B cell (primary cell): ENCODE measurements at regions of chr1 and their contacts with region 1.

Region 1: DNA sequence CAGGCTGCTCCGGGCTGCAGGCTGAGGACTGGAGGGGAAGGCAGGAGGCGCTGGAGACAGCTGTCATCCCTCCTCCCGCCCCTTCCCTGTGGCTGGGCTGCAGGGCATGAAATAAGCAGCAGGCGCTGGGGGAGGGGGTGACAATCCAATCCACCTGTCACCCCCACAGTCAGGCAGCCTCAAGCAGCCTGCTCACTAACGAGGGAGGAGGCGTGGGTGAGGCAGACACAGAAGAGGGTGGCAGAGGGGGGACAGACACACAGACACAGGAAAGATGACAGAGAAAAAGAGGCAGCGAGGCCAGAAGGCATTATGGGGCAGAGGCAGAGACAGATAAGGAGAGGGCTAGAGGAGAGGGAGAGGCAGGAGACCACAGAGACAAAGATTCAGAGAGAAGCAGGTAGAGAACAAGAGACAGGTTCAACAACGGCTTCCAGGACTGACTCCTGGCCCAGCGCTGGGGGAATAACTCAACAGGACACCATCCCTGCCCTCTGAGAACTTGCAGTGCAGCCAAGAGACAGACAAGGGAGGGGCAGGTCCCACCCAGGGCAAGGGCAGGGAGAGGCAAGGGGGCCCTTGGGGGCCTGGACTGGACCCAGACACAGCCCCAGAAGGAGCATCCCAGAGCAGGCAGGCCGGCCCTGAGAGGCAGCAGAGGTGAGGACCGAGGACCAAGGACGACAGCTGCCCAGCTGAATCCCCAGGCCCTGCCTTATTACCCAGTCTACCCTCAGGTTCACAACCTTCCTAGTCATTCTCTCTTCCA is 11.2 kb downstream of the MEF2D start:
- DNase-seq: peak; percentile 49
- ATAC-seq: no peak
- H3K4me3 ChIP-seq: peak overlapping the region in 2 of 5 experiments; percentile 7 to 30
- H3K4me3 Mint-ChIP-seq: peak overlapping the region; percentile 90
- H3K27ac ChIP-seq: peak overlapping the region; percentile 72 to 94
- H3K27ac Mint-ChIP-seq: peak overlapping the region; percentile 96
- H3K4me1 ChIP-seq: peaks cover 83 to 93% of the 10 kb centered on the region in 2 donors
- H3K4me1 Mint-ChIP-seq: peaks cover 91% of the 10 kb centered on the region
- H3K27me3 ChIP-seq: no peaks in the 10 kb centered on the region
- H3K27me3 Mint-ChIP-seq: no peaks in the 10 kb centered on the region
- CTCF ChIP-seq: no peak

Region 2: GRCh38 chr1:155145491-155145890 is 1343.9 kb before region 1 on chr1:
- CTCF ChIA-PET with region 1: no interaction called
- POLR2A ChIA-PET with region 1: interaction called, 10 read pairs
- intact Hi-C with region 1: no loop called
- DNase-seq: no peak
- ATAC-seq: no peak
- H3K4me3 ChIP-seq: no peak overlapping the region
- H3K4me3 Mint-ChIP-seq: no peak overlapping the region
- H3K27ac ChIP-seq: no peak overlapping the region
- H3K27ac Mint-ChIP-seq: no peak overlapping the region
- H3K4me1 ChIP-seq: peaks cover 13 to 17% of the 10 kb centered on the region in 2 donors
- H3K4me1 Mint-ChIP-seq: peaks cover 20% of the 10 kb centered on the region
- H3K27me3 ChIP-seq: no peaks in the 10 kb centered on the region
- H3K27me3 Mint-ChIP-seq: no peaks in the 10 kb centered on the region
- CTCF ChIP-seq: no peak

Region 3: DNA sequence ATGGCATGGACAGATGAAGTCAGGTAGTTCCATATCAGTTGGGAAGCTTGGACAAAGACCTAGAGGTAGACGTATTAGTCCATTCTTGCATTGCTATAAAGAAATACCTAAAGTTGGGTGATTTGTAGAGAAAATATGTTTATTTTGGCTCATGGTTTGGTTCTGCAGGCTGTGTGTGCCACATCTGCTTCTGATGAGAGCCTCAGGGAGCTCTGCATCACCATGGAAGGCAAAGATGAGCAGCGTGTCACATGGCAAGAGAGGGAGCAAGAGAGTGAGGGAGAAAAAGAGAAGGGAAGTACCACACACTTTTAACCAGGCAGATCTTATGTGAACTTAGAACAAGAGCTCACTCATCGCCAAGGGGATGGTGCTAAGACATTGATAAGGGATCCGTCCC is 142.0 kb before region 1 on chr1:
- CTCF ChIA-PET with region 1: no interaction called
- POLR2A ChIA-PET with region 1: interaction called, 10 read pairs
- intact Hi-C with region 1: no loop called
- DNase-seq: no peak
- ATAC-seq: no peak
- H3K4me3 ChIP-seq: no peak overlapping the region
- H3K4me3 Mint-ChIP-seq: no peak overlapping the region
- H3K27ac ChIP-seq: no peak overlapping the region
- H3K27ac Mint-ChIP-seq: no peak overlapping the region
- H3K4me1 ChIP-seq: no peaks in the 10 kb centered on the region
- H3K4me1 Mint-ChIP-seq: no peaks in the 10 kb centered on the region
- H3K27me3 ChIP-seq: peaks cover 0 to 17% (median 5%) of the 10 kb centered on the region in 4 experiments
- H3K27me3 Mint-ChIP-seq: peaks cover 24% of the 10 kb centered on the region
- CTCF ChIP-seq: no peak

Region 4: DNA sequence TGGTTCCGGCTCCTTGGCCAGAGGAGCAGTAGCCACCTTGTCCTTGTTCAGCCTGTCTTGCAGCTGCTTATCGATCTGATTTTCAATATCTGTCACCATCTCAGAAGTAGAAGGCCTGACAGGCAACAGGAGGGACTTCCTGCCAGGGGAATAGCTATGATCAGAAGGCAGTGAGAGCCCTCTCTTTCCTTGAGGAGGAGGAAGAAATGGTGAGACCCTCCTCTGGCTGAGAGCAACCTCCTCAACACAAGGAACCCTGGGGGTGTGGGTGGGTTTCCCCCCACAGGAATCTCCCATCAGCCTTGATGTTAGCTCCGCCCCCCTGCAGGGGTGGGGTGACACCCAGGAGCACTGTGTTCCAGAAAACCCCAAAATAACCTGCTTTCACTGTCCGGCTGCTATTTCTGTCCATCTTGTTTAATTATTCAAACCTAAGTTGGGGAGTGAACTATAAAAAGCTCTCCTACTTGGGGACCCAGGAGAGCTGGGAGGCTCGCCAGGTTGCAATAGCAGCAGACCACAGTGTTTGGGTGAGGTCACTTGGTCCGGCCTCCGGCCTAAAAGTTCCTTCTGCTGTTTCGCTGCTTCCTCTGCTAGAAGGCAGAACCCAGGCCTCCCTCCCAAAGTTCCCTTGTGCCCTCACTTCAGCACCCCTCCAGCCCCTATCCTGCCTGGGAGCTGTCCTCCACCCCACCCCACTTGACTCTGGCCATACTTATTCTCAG is 19.0 kb after region 1 on chr1:
- CTCF ChIA-PET with region 1: interaction called, 383 read pairs
- POLR2A ChIA-PET with region 1: interaction called, 193 read pairs
- intact Hi-C with region 1: loop called (anchors 1 kb)
- DNase-seq: peak; percentile 45
- ATAC-seq: no peak
- H3K4me3 ChIP-seq: peak overlapping the region in 1 of 5 experiments; percentile 11
- H3K4me3 Mint-ChIP-seq: peak overlapping the region; percentile 52
- H3K27ac ChIP-seq: peak overlapping the region; percentile 10 to 54
- H3K27ac Mint-ChIP-seq: peak overlapping the region; percentile 42
- H3K4me1 ChIP-seq: peaks cover 25 to 40% of the 10 kb centered on the region in 2 donors
- H3K4me1 Mint-ChIP-seq: peaks cover 49% of the 10 kb centered on the region
- H3K27me3 ChIP-seq: no peaks in the 10 kb centered on the region
- H3K27me3 Mint-ChIP-seq: no peaks in the 10 kb centered on the region
- CTCF ChIP-seq: no peak

Region 5: DNA sequence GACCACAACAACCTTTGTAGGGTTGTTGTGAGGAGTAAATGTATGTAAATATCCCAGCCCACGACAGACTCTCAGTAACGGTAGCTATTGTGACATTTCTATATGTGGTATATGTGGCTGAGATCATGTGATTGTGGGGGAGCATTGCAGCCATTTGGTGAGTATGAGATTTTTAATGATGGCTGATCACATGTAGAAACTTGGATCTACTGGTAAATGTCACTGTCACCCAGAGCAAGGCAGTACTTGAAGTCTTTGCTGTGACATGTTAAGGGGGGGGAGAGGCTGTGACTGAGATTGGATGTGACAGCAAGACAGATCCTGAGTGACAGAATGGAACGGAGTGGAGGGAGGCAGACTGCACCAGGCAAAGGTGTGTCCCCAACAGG is 35.1 kb after region 1 on chr1:
- CTCF ChIA-PET with region 1: interaction called, 3 read pairs
- POLR2A ChIA-PET with region 1: interaction called, 3 read pairs
- intact Hi-C with region 1: loop called (anchors 5 kb)
- DNase-seq: peak; percentile 43
- ATAC-seq: peak; percentile 49
- H3K4me3 ChIP-seq: peak overlapping the region in 1 of 5 experiments; percentile 16
- H3K4me3 Mint-ChIP-seq: peak overlapping the region; percentile 71
- H3K27ac ChIP-seq: peak overlapping the region in 1 of 2 donors; percentile 49
- H3K27ac Mint-ChIP-seq: peak overlapping the region; percentile 64
- H3K4me1 ChIP-seq: peaks cover 20 to 24% of the 10 kb centered on the region in 2 donors
- H3K4me1 Mint-ChIP-seq: peaks cover 23% of the 10 kb centered on the region
- H3K27me3 ChIP-seq: no peaks in the 10 kb centered on the region
- H3K27me3 Mint-ChIP-seq: no peaks in the 10 kb centered on the region
- CTCF ChIP-seq: no peak